B cell (primary cell): ENCODE measurements at regions of chr4 and their contacts with region 1.

Region 1: DNA sequence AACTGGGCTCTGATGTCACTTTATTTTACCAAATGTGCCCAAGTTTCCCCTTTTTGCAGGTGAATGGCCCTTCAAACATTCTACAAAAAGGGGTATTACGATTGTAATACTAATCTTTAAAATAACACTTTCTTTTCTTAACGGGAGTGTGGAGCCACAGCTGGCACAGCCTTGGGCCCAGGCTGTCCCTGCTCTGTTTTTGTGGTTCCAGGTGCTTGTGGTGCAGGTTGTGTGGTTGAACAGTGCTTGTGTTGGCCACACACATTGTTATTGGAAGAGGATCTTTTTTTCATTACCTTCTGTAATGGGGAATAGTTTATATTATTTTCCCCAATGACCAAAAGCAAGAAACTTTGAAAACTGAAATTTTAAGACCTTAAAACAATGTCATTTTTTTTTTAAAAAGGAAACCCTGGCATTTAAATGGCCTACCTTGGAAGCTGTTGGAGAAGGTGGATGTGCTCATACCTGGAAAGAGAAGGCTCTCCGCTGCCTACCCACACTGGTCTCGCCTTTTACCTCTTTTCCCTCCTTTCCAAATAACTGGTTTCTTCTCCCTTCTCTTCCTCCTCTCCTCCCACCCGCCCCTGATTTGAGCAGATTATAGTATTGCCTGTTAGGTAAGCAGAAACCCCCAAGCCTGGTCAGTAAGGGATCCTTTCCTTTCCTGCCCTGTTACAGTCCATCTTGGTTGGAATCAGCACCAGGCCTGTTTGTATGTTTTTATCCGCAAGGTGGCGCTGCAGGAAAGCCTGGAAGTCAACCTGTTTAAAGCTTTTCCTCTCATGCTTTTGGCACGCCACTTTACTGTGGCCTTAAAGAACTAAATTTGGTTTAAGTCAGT is 28.6 kb downstream of the HADH start:
- DNase-seq: peak; percentile 74
- ATAC-seq: peak; percentile 39
- H3K4me3 ChIP-seq: no peak overlapping the region
- H3K4me3 Mint-ChIP-seq: no peak overlapping the region
- H3K27ac ChIP-seq: no peak overlapping the region
- H3K27ac Mint-ChIP-seq: no peak overlapping the region
- H3K4me1 ChIP-seq: no peaks in the 10 kb centered on the region
- H3K4me1 Mint-ChIP-seq: no peaks in the 10 kb centered on the region
- H3K27me3 ChIP-seq: no peaks in the 10 kb centered on the region
- H3K27me3 Mint-ChIP-seq: no peaks in the 10 kb centered on the region
- CTCF ChIP-seq: peak; percentile 94

Region 2: GRCh38 chr4:107774681-107775080 is 243.6 kb before region 1 on chr4:
- CTCF ChIA-PET with region 1: no interaction called
- POLR2A ChIA-PET with region 1: no interaction called
- intact Hi-C with region 1: no loop called
- DNase-seq: no peak
- ATAC-seq: no peak
- H3K4me3 ChIP-seq: no peak overlapping the region
- H3K4me3 Mint-ChIP-seq: no peak overlapping the region
- H3K27ac ChIP-seq: no peak overlapping the region
- H3K27ac Mint-ChIP-seq: no peak overlapping the region
- H3K4me1 ChIP-seq: no peaks in the 10 kb centered on the region
- H3K4me1 Mint-ChIP-seq: no peaks in the 10 kb centered on the region
- H3K27me3 ChIP-seq: no peaks in the 10 kb centered on the region
- H3K27me3 Mint-ChIP-seq: peaks cover 7% of the 10 kb centered on the region
- CTCF ChIP-seq: no peak

Region 3: GRCh38 chr4:107996949-107997788 is 21.1 kb before region 1 on chr4:
- CTCF ChIA-PET with region 1: interaction called, 19 read pairs
- POLR2A ChIA-PET with region 1: no interaction called
- intact Hi-C with region 1: no loop called
- DNase-seq: no peak
- ATAC-seq: no peak
- H3K4me3 ChIP-seq: no peak overlapping the region
- H3K4me3 Mint-ChIP-seq: no peak overlapping the region
- H3K27ac ChIP-seq: no peak overlapping the region
- H3K27ac Mint-ChIP-seq: no peak overlapping the region
- H3K4me1 ChIP-seq: peaks cover 17 to 22% of the 10 kb centered on the region in 2 donors
- H3K4me1 Mint-ChIP-seq: peaks cover 37% of the 10 kb centered on the region
- H3K27me3 ChIP-seq: no peaks in the 10 kb centered on the region
- H3K27me3 Mint-ChIP-seq: no peaks in the 10 kb centered on the region
- CTCF ChIP-seq: no peak

Region 4: DNA sequence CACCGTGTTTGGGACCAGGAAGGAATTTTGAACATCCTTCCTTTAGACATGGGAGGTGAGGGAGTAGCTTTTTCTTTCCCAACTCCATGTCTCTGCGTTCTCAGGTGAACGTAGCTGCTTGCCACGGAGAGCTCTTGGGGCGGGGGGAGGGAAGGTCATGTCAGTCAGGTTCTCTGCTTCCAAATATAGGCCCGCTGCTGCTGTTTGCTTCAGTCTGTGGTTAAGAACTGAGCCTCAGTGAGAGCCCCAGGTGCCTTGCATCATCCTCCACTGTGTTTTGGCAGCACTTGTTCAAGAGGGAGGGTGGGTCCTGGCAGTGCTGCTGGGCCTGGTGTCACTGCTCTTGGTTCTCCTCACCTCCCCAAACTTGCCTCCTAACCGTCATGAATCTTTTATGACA is 18.0 kb after region 1 on chr4:
- CTCF ChIA-PET with region 1: interaction called, 26 read pairs
- POLR2A ChIA-PET with region 1: no interaction called
- intact Hi-C with region 1: no loop called
- DNase-seq: peak; percentile 12
- ATAC-seq: no peak
- H3K4me3 ChIP-seq: no peak overlapping the region
- H3K4me3 Mint-ChIP-seq: no peak overlapping the region
- H3K27ac ChIP-seq: no peak overlapping the region
- H3K27ac Mint-ChIP-seq: no peak overlapping the region
- H3K4me1 ChIP-seq: peaks cover 0 to 13% of the 10 kb centered on the region in 2 donors
- H3K4me1 Mint-ChIP-seq: peaks cover 10% of the 10 kb centered on the region
- H3K27me3 ChIP-seq: no peaks in the 10 kb centered on the region
- H3K27me3 Mint-ChIP-seq: no peaks in the 10 kb centered on the region
- CTCF ChIP-seq: no peak